Natural killer cell (primary cell): ENCODE measurements at regions of chr6 and their contacts with region 1.

Region 1: DNA sequence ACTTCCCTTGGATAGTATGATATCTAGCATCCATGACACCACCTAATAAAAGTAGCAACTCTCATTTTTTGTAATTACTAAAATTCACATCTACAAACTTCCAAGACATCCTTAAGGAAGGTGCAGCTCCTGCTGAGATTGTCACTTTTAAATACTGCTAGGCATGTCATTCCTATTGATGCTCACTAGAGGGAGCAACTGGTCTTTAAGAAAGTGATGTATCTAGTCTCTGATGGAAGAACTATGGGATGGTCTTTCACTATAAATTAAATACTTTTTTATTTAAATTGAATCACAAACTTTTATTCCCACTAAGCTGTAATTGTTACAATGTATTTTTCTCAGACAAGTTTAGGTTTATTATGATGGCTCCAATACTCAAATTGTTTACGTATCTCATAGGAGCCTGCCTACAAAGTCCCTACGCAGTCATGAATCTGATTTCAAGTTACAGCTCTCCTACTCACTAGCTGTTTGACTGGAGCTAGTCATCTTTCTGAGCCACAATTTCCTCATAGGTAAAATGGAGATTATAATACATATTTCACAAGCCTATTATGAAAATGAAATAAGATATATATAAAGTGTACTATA is 8.1 kb upstream of the TSPYL1 start:
- DNase-seq: peak in 1 of 2 donors; percentile 74
- ATAC-seq: peak; percentile 82 to 96 (median 94)
- H3K4me3 ChIP-seq: no peak overlapping the region
- H3K4me3 Mint-ChIP-seq: no peak overlapping the region
- H3K27ac ChIP-seq: no peak overlapping the region
- H3K27ac Mint-ChIP-seq: no peak overlapping the region
- H3K4me1 ChIP-seq: no peaks in the 10 kb centered on the region
- H3K4me1 Mint-ChIP-seq: no peaks in the 10 kb centered on the region
- H3K27me3 ChIP-seq: no peaks in the 10 kb centered on the region
- H3K27me3 Mint-ChIP-seq: no peaks in the 10 kb centered on the region
- CTCF ChIP-seq: peak; percentile 95

Region 2: DNA sequence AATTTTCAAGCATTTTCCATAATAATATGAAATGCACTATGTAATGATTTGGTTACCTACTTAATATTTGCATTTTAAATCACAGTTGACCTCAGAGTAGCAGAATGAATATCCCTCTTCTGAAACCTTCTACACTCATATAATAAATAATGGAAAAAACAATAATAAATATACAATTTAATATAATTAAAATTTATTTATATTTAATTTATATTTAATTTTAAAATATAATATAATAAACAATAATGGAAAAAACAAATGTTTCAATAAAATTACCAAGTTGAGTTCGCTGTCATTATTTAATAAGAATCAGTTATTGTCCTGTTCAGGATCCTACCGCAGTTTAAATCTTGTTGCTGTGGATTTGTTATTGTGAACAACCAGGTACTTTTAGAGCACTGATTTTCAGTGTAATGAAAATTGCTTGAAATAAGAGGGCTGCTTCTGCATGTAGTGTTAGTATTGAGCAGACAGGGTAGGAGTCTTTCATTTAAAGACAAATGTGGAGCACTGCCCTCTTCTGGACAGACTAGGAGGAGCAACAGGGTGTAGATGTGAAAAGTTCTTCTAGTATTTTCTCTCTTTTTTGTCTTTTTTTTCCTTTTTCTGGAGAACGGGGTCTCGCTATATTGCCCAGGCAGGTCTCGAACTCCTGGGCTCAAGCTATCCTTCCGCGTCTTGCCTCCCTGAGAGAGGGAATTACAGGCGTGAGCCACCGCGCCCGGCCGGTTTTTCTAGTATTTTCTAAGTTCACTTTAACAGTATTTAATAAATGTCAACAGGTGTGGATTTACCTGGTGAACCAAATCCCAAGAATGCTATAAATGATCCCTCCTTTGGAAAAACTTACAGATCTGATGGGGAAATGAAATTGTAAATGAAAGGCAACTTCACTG is 244.1 kb after region 1 on chr6:
- intact Hi-C with region 1: loop called (anchors 1 kb)
- DNase-seq: peak; percentile 30 to 82
- ATAC-seq: peak; percentile 95 to 97 (median 97)
- H3K4me3 ChIP-seq: no peak overlapping the region
- H3K4me3 Mint-ChIP-seq: no peak overlapping the region
- H3K27ac ChIP-seq: no peak overlapping the region
- H3K27ac Mint-ChIP-seq: no peak overlapping the region
- H3K4me1 ChIP-seq: no peaks in the 10 kb centered on the region
- H3K4me1 Mint-ChIP-seq: no peaks in the 10 kb centered on the region
- H3K27me3 ChIP-seq: no peaks in the 10 kb centered on the region
- H3K27me3 Mint-ChIP-seq: peaks cover 21 to 42% of the 10 kb centered on the region in 2 donors
- CTCF ChIP-seq: peak; percentile 95

Region 3: DNA sequence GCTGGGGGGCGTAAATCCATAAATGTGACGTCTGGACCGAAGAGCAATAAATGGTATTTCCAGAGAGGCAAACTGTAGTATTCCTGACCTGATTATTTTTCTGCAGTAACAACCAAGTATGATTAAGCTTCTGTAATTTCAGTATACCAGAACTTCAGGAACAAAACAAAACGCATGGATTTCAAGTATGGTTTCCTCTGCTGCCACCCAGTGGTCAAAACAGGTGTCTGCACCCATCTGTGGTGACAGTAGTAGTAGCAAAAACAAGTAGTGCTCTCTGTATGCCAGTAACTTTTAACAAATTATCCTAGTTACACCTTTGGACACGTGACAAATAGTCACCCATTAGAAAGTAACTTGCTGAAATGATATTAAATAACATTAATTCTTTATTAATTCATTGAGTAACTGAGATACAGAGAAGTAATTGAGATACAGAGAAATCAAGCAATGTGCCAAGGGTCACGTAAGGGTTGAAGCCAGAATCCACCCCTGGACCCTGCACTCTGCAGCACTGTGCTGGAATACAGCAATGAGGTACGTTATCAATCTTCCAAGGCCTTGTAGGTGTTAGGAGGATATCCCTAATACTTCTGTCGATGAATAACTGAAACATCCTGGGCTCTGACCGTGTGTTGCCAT is 273.7 kb after region 1 on chr6:
- intact Hi-C with region 1: loop called (anchors 2 kb)
- DNase-seq: peak; percentile 54 to 84
- ATAC-seq: peak; percentile 83 to 95 (median 90)
- H3K4me3 ChIP-seq: no peak overlapping the region
- H3K4me3 Mint-ChIP-seq: no peak overlapping the region
- H3K27ac ChIP-seq: no peak overlapping the region
- H3K27ac Mint-ChIP-seq: no peak overlapping the region
- H3K4me1 ChIP-seq: peaks cover 8% of the 10 kb centered on the region
- H3K4me1 Mint-ChIP-seq: no peaks in the 10 kb centered on the region
- H3K27me3 ChIP-seq: peaks cover 10% of the 10 kb centered on the region
- H3K27me3 Mint-ChIP-seq: peaks cover 31 to 35% of the 10 kb centered on the region in 2 donors
- CTCF ChIP-seq: peak; percentile 93

Region 4: GRCh38 chr6:116580198-116580597 is 292.4 kb after region 1 on chr6:
- intact Hi-C with region 1: no loop called
- DNase-seq: no peak
- ATAC-seq: no peak
- H3K4me3 ChIP-seq: no peak overlapping the region
- H3K4me3 Mint-ChIP-seq: no peak overlapping the region
- H3K27ac ChIP-seq: no peak overlapping the region
- H3K27ac Mint-ChIP-seq: no peak overlapping the region
- H3K4me1 ChIP-seq: no peaks in the 10 kb centered on the region
- H3K4me1 Mint-ChIP-seq: peaks cover 17 to 22% of the 10 kb centered on the region in 2 donors
- H3K27me3 ChIP-seq: no peaks in the 10 kb centered on the region
- H3K27me3 Mint-ChIP-seq: no peaks in the 10 kb centered on the region
- CTCF ChIP-seq: no peak